ENCODE measurements at regions of chr18 and their contacts with region 1.

Region 1: DNA sequence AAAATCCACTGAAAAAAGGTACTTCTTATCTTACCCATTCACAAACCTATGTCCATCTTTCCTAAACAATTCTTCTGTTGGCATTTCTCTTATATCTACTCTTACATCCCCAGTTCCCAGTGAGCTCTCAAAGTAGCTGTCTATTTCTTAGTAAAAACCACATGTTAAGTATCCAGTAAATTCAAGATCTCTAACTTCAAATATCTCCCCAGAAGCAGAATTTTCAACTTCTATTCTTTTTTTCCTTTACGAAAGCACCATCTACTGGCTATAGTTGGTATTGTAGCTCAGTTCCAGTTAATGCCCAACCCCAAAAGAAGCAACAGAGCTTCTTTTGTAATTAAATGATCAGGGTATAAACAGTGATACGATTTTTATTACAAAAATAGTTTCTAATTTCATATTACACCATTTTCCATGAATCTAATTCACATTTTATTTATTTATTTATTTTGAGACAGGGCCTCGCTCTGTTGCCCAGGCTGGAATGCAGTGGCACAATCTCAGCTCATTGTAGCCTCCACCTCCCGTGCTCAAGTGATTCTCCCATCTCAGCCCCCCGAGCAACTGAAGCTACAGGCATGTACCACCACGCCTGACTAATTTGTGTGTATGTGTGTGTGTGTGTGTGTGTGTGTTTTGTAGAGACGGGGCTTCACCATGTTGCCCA is 28.5 kb downstream of the HRH4 start:
- DNase-seq: peak in 2 of 5 donors; percentile 12 to 25
- H3K4me3 ChIP-seq: no peak overlapping the region
- H3K4me3 Mint-ChIP-seq: no peak overlapping the region
- H3K27ac ChIP-seq: no peak overlapping the region
- H3K27ac Mint-ChIP-seq: no peak overlapping the region
- H3K4me1 ChIP-seq: peaks cover 9% of the 10 kb centered on the region
- H3K4me1 Mint-ChIP-seq: peaks cover 32 to 40% (median 37%) of the 10 kb centered on the region in 3 donors
- H3K27me3 ChIP-seq: no peaks in the 10 kb centered on the region
- H3K27me3 Mint-ChIP-seq: peaks cover 1 to 4% of the 10 kb centered on the region in 2 donors

Region 2: GRCh38 chr18:23998811-23999210 is 490.1 kb before region 1 on chr18:
- CTCF ChIA-PET with region 1: no interaction called
- POLR2A ChIA-PET with region 1: no interaction called
- DNase-seq: no peak
- H3K4me3 ChIP-seq: no peak overlapping the region
- H3K4me3 Mint-ChIP-seq: peak overlapping the region in 5 of 7 donors; percentile 13 to 70 (median 57)
- H3K27ac ChIP-seq: no peak overlapping the region
- H3K27ac Mint-ChIP-seq: peak overlapping the region; percentile 85 to 97 (median 95)
- H3K4me1 ChIP-seq: peaks cover 64% of the 10 kb centered on the region
- H3K4me1 Mint-ChIP-seq: peaks cover 77 to 95% (median 89%) of the 10 kb centered on the region in 3 donors
- H3K27me3 ChIP-seq: no peaks in the 10 kb centered on the region
- H3K27me3 Mint-ChIP-seq: no peaks in the 10 kb centered on the region

Region 3: GRCh38 chr18:24362758-24363157 is 126.2 kb before region 1 on chr18:
- CTCF ChIA-PET with region 1: interaction called, 32 read pairs
- POLR2A ChIA-PET with region 1: no interaction called
- DNase-seq: no peak
- H3K4me3 ChIP-seq: no peak overlapping the region
- H3K4me3 Mint-ChIP-seq: no peak overlapping the region
- H3K27ac ChIP-seq: no peak overlapping the region
- H3K27ac Mint-ChIP-seq: no peak overlapping the region
- H3K4me1 ChIP-seq: no peaks in the 10 kb centered on the region
- H3K4me1 Mint-ChIP-seq: no peaks in the 10 kb centered on the region
- H3K27me3 ChIP-seq: no peaks in the 10 kb centered on the region
- H3K27me3 Mint-ChIP-seq: peaks cover 0 to 3% of the 10 kb centered on the region in 2 donors

Region 4: GRCh38 chr18:24726727-24727492 is 238.0 kb after region 1 on chr18:
- CTCF ChIA-PET with region 1: interaction called, 69 read pairs
- POLR2A ChIA-PET with region 1: no interaction called
- DNase-seq: peak; percentile 29 to 59 (median 38)
- H3K4me3 ChIP-seq: no peak overlapping the region
- H3K4me3 Mint-ChIP-seq: no peak overlapping the region
- H3K27ac ChIP-seq: no peak overlapping the region
- H3K27ac Mint-ChIP-seq: peak overlapping the region in 1 of 8 donors; percentile 21
- H3K4me1 ChIP-seq: no peaks in the 10 kb centered on the region
- H3K4me1 Mint-ChIP-seq: peaks cover 0 to 5% (median 0%) of the 10 kb centered on the region in 3 donors
- H3K27me3 ChIP-seq: no peaks in the 10 kb centered on the region
- H3K27me3 Mint-ChIP-seq: peaks cover 20 to 34% of the 10 kb centered on the region in 2 donors

Measured in CD8-positive, alpha-beta memory T cell (primary cell).